Activated T-helper 2 cell treated with anti-CD3 and anti-CD28 coated beads, Interferon-gamma antibody, Interleukin-2, Interleukin-4, amounts not matched to agents 10 μg/mL and 5 μg/mL and 100 μg/mL, durations not matched to agents 14 hours and 24 hours and 36 hours (primary cell): ENCODE measurements at regions of chr16 and their contacts with region 1.

Region 1: GRCh38 chr16:81567987-81568748 is 123.6 kb downstream of the CMIP start:
- DNase-seq: no peak
- H3K4me3 Mint-ChIP-seq: peak overlapping the region; percentile 22
- H3K27ac Mint-ChIP-seq: peak overlapping the region; percentile 94
- H3K4me1 Mint-ChIP-seq: peaks cover 34% of the 10 kb centered on the region
- H3K27me3 Mint-ChIP-seq: no peaks in the 10 kb centered on the region

Region 2: GRCh38 chr16:81444448-81445121 is 123.6 kb before region 1 on chr16 and contains the start of gene CMIP:
- intact Hi-C with region 1: loop called (anchors 2 kb)
- DNase-seq: peak; percentile 77
- H3K4me3 Mint-ChIP-seq: peak within 1 kb of the TSS; percentile 90
- H3K27ac Mint-ChIP-seq: peak within 1 kb of the TSS; percentile 83
- H3K4me1 Mint-ChIP-seq: peaks cover 38% of the 10 kb centered on the region
- H3K27me3 Mint-ChIP-seq: peaks cover 29% of the 10 kb centered on the region
- total RNA-seq, gene CMIP: 68.0 and 76.9 TPM in 2 replicates

Region 3: GRCh38 chr16:81486555-81487061 is 81.6 kb before region 1 on chr16:
- intact Hi-C with region 1: no loop called
- DNase-seq: no peak
- H3K4me3 Mint-ChIP-seq: no peak overlapping the region
- H3K27ac Mint-ChIP-seq: no peak overlapping the region
- H3K4me1 Mint-ChIP-seq: peaks cover 29% of the 10 kb centered on the region
- H3K27me3 Mint-ChIP-seq: no peaks in the 10 kb centered on the region

Region 4: GRCh38 chr16:81521151-81521626 is 47.0 kb before region 1 on chr16:
- intact Hi-C with region 1: loop called (anchors 5 kb)
- DNase-seq: peak; percentile 81
- H3K4me3 Mint-ChIP-seq: no peak overlapping the region
- H3K27ac Mint-ChIP-seq: peak overlapping the region; percentile 54
- H3K4me1 Mint-ChIP-seq: peaks cover 55% of the 10 kb centered on the region
- H3K27me3 Mint-ChIP-seq: no peaks in the 10 kb centered on the region

Region 5: GRCh38 chr16:81551151-81551808 is 16.9 kb before region 1 on chr16:
- intact Hi-C with region 1: loop called (anchors 2 kb)
- DNase-seq: no peak
- H3K4me3 Mint-ChIP-seq: no peak overlapping the region
- H3K27ac Mint-ChIP-seq: peak overlapping the region; percentile 66
- H3K4me1 Mint-ChIP-seq: peaks cover 39% of the 10 kb centered on the region
- H3K27me3 Mint-ChIP-seq: no peaks in the 10 kb centered on the region

Region 6: GRCh38 chr16:81595604-81596292 is 27.6 kb after region 1 on chr16:
- intact Hi-C with region 1: loop called (anchors 1 kb)
- DNase-seq: no peak
- H3K4me3 Mint-ChIP-seq: no peak overlapping the region
- H3K27ac Mint-ChIP-seq: peak overlapping the region; percentile 91
- H3K4me1 Mint-ChIP-seq: peaks cover 30% of the 10 kb centered on the region
- H3K27me3 Mint-ChIP-seq: no peaks in the 10 kb centered on the region

Region 7: GRCh38 chr16:81616321-81617055 is 48.3 kb after region 1 on chr16:
- intact Hi-C with region 1: loop called (anchors 1 kb)
- DNase-seq: peak; percentile 63
- H3K4me3 Mint-ChIP-seq: peak overlapping the region; percentile 49
- H3K27ac Mint-ChIP-seq: peak overlapping the region; percentile 91
- H3K4me1 Mint-ChIP-seq: peaks cover 11% of the 10 kb centered on the region
- H3K27me3 Mint-ChIP-seq: no peaks in the 10 kb centered on the region